H1 (cell line): ENCODE measurements at regions of chr11 and their contacts with region 1.

Region 1: DNA sequence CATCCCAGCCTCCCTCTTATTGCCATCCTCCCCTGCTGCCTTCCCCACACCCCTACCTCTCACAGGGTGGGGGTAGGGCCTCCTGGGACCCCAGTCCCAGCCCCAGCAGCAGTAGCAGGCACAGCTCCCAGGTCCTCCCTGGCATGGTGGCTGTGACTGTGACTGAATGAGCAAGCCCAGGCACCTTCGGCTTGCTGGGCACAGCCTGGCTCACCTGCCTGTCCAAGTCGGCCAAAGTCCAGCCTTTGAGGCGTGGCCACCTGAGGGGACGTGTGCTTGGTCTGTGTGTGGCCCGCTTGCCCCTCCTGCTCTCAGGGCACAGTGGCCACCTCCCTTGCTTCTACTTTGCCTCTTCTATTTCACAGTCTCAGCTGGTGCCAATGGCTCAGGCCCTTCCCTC is at the start of gene TREH:
- DNase-seq: no peak
- H3K4me3 ChIP-seq: no peak within 1 kb of the TSS
- H3K27ac ChIP-seq: no peak within 1 kb of the TSS
- H3K4me1 ChIP-seq: peaks cover 0 to 3% (median under 1%) of the 10 kb centered on the region in 4 experiments; a peak in 2 of 7 replicates
- H3K27me3 ChIP-seq: no peaks in the 10 kb centered on the region
- CTCF ChIP-seq: no peak
- EP300 ChIP-seq: no peak
- POLR2A ChIP-seq: no peak
- RAD21 ChIP-seq: no peak
- total RNA-seq, gene TREH: not detected in 2 replicates

Region 2: GRCh38 chr11:118649941-118650340 is 29.5 kb before region 1 on chr11:
- CTCF ChIA-PET with region 1: no interaction called
- POLR2A ChIA-PET with region 1: no interaction called
- DNase-seq: no peak
- H3K4me3 ChIP-seq: no peak overlapping the region
- H3K27ac ChIP-seq: no peak overlapping the region
- H3K4me1 ChIP-seq: no peaks in the 10 kb centered on the region
- H3K27me3 ChIP-seq: no peaks in the 10 kb centered on the region
- CTCF ChIP-seq: no peak
- EP300 ChIP-seq: no peak
- POLR2A ChIP-seq: no peak
- RAD21 ChIP-seq: no peak

Region 3: DNA sequence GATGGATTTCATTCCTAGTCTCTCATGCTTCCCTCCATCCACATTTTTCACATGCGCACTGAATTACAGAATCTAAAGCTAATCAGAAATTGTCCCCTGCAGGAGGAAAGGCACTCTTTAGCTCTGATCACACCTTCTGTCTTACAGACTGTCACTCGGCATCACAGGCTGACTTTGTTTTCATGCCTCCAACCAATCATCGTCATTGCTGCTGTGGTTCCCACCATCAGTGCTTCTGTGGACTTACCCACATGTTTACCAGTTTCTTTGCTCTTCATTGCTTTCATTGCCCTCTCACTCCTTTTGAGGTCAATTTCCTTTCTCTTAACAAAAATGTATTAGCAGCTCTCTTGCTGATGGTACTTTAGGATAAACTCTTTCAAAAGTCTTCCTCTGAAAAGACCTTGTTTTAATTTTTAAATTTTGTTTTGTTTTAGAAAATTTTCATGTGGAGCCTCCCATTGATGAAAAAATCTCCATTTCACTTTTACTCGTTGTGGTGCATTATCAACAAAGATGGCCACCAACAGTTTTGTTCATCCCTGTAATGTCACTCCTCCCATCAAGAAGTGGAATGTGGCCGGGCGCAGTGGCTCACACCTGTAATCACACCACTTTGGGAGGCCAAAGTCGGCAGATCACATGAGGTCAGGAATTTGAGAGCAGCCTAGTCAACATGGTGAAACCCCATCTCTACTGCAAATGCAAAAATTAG is 20.2 kb after region 1 on chr11:
- CTCF ChIA-PET with region 1: interaction called, 11 read pairs
- POLR2A ChIA-PET with region 1: no interaction called
- DNase-seq: no peak
- H3K4me3 ChIP-seq: no peak overlapping the region
- H3K27ac ChIP-seq: no peak overlapping the region
- H3K4me1 ChIP-seq: peaks cover 0 to 11% (median 6%) of the 10 kb centered on the region in 4 experiments; a peak in 5 of 7 replicates
- H3K27me3 ChIP-seq: no peaks in the 10 kb centered on the region
- CTCF ChIP-seq: no peak
- EP300 ChIP-seq: no peak
- POLR2A ChIP-seq: no peak
- RAD21 ChIP-seq: no peak

Region 4: GRCh38 chr11:118870396-118871345 is 191.2 kb after region 1 on chr11:
- CTCF ChIA-PET with region 1: no interaction called
- POLR2A ChIA-PET with region 1: no interaction called
- DNase-seq: peak in 1 of 2 experiments; percentile 63
- H3K4me3 ChIP-seq: peak overlapping the region in 2 of 4 experiments; percentile 7 to 32; a peak in 4 of 8 replicates
- H3K27ac ChIP-seq: no peak overlapping the region
- H3K4me1 ChIP-seq: peaks cover 0 to 12% (median 6%) of the 10 kb centered on the region in 4 experiments; a peak in 6 of 7 replicates
- H3K27me3 ChIP-seq: no peaks in the 10 kb centered on the region
- CTCF ChIP-seq: no peak
- EP300 ChIP-seq: no peak
- POLR2A ChIP-seq: no peak
- RAD21 ChIP-seq: peak; percentile 6 to 26; a peak in 1 of 4 replicates